ENCODE measurements at regions of chr1 and their contacts with region 1.

Region 1: GRCh38 chr1:59759156-59759925 is 55.4 kb upstream of the HOOK1 start:
- DNase-seq: peak; percentile 85
- ATAC-seq: peak; percentile 97

Region 2: DNA sequence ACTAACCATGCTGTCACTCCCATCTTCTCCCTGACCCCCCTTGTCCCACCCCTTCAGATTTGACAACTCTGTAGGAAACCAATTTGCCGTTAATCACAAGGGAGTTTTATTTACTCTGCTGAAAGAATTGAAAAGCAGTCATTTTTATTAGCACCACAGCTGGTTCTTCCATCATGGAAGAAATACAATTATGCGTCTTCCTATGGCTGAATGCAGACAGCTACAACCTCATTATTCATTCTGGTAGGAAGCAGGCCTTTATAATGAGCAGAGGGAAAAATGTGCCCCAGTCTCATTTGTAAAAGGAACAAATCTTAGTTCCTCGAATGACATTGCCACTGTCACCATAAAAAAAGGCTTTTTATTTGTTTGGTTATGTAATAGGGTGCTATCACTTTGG is 1010.7 kb before region 1 on chr1:
- intact Hi-C with region 1: loop called (anchors 5 kb)
- DNase-seq: no peak
- ATAC-seq: no peak

Region 3: DNA sequence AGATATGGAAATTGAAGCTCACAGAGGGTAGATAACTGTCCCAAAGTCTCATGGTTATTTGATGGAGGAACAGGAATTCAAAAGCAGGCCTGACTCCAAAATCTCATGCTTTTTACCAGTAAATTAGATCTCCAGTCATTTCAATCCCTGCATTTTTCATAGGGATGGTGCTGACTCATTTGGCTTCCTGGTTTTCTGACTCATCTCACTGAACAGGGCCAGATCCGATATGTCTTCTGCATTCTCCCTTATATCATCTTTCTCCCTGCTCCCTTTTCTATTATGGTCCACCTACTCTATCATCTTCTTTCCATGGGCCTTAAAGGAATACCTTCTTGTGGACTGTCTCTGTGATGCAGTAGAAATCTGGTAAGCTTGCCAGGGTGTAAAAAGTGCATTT is 275.2 kb before region 1 on chr1:
- intact Hi-C with region 1: no loop called
- DNase-seq: no peak
- ATAC-seq: no peak

Measured in Right ventricle myocardium superior (tissue), 1 donor.